Body of pancreas (tissue), 4 donors: ENCODE measurements at regions of chr20 and their contacts with region 1.

Region 1: DNA sequence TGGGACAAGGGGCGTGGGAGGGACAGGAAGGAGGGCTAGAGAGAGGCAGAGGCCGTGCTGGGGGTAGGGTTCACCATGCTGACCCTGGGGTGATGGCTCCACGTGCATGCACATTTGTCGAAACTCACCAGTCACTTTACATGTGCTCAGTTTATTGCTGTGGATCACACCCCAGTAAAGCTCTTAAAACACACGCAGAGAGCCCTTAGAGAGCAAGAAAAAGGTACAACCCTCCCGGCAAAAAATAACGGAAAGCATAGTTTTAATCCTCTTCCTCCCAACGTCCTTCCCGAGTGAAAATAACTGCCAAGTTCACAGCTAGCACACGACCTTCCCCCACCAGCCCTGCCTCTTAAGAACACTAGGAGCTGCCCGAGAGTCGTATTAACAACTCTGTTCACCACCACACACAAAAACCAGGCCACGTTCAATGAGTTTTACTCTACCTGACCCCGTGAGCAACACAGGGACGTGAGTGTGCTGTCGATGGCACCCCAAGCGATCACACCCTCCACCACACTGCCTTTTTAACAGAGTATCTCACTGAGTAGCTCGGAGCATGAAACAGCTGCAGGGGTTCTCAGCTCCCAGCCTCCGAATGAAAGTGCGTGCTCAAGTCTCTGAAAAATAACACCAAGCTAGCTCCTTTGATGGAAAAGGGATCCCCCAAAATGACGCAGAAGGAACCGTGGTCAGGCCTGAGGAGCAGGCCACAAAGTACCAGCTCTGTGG is 39.7 kb downstream of the TAF4 start:
- DNase-seq: peak; percentile 40 to 70 (median 58)
- ATAC-seq: peak; percentile 70
- H3K4me3 ChIP-seq: no peak overlapping the region
- H3K27ac ChIP-seq: peak overlapping the region in 3 of 4 donors; percentile 43 to 52 (median 43)
- H3K4me1 ChIP-seq: peaks cover 47% of the 10 kb centered on the region
- H3K27me3 ChIP-seq: no peaks in the 10 kb centered on the region
- CTCF ChIP-seq: peak in 6 of 7 experiments; percentile 21 to 83 (median 68)
- POLR2A ChIP-seq: no peak

Region 2: GRCh38 chr20:62136283-62137091 is 110.5 kb after region 1 on chr20:
- intact Hi-C with region 1: loop called (anchors 5 kb)
- DNase-seq: peak; percentile 65 to 85 (median 78)
- ATAC-seq: peak; percentile 51
- H3K4me3 ChIP-seq: no peak overlapping the region
- H3K27ac ChIP-seq: peak overlapping the region in 1 of 4 donors; percentile 10
- H3K4me1 ChIP-seq: peaks cover 14% of the 10 kb centered on the region
- H3K27me3 ChIP-seq: no peaks in the 10 kb centered on the region
- CTCF ChIP-seq: peak; percentile 55 to 82 (median 77)
- POLR2A ChIP-seq: no peak